PC-3 (cell line): ENCODE measurements at regions of chr9 and their contacts with region 1.

Region 1: GRCh38 chr9:14018081-14018480 is 295.9 kb downstream of the NFIB start:
- DNase-seq: peak; percentile 59
- ATAC-seq: peak; percentile 67
- H3K4me3 ChIP-seq: no peak overlapping the region
- H3K27ac ChIP-seq: no peak overlapping the region
- H3K4me1 ChIP-seq: peaks cover 6% of the 10 kb centered on the region; the same call in 1 of the 2 replicates
- H3K27me3 ChIP-seq: no peaks in the 10 kb centered on the region
- CTCF ChIP-seq: no peak

Region 2: DNA sequence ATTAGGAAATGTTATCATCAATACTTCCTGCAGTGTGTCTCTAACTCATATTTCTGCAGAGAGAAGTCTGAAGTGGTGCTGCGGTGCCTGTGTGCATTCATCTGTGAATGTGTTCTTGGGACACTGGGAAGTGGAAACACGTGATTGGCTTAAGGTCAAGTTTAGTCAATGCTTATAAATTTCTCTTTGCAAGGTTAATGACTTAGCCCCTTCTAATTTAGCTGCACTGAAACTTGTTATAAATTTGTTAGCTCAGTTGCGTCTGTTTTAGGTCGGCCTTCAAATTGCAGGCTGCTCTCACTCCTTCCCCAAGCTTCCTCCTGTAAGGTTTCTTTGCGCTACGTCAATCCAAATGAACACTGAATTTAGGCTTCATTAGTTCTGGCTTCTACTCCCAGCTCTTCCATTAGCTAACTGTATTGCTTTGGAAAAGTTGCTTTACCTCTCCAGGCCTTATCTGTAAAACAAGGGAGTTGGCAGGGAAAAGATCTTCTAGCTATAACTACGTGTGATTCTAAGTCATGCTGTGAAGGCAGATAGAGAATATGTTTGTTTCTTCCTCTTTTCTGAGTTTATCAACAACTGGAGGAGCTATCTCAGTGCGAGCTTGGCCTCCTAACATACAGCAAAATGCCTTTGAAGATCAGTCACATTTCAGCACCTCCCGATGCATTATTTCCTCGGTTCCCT is 46.0 kb before region 1 on chr9:
- CTCF ChIA-PET with region 1: no interaction called
- POLR2A ChIA-PET with region 1: interaction called, 16 read pairs
- intact Hi-C with region 1: no loop called
- DNase-seq: no peak
- ATAC-seq: no peak
- H3K4me3 ChIP-seq: no peak overlapping the region
- H3K27ac ChIP-seq: no peak overlapping the region
- H3K4me1 ChIP-seq: no peaks in the 10 kb centered on the region
- H3K27me3 ChIP-seq: no peaks in the 10 kb centered on the region
- CTCF ChIP-seq: no peak